HEK293 (cell line): ENCODE measurements at regions of chr10 and their contacts with region 1.

Region 1: DNA sequence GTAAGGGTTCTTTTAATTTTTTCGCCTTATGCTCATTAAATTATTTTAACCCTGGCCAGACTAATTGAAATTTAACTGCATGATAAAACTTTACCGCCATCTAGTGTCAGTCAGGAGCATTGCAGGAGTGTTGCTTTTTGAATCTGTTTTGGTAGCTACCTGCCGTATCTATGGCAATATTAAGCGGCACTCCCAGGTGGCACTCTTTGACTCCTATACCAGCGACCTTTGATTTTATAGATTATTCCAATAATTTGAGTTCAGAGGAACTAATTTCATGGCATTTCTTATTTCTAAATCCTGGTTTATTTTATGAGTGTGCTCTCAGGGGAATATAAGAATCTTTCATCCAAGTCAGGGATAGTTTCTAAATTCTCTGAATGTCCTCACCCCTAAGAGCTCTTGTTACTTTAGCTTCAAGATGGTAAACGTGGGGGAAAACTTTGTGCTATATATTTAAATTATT is 198.9 kb downstream of the REEP3 start:
- H3K4me3 ChIP-seq: no peak overlapping the region
- H3K27ac ChIP-seq: no peak overlapping the region
- H3K4me1 ChIP-seq: no peaks in the 10 kb centered on the region
- CTCF ChIP-seq: peak; percentile 74

Region 2: DNA sequence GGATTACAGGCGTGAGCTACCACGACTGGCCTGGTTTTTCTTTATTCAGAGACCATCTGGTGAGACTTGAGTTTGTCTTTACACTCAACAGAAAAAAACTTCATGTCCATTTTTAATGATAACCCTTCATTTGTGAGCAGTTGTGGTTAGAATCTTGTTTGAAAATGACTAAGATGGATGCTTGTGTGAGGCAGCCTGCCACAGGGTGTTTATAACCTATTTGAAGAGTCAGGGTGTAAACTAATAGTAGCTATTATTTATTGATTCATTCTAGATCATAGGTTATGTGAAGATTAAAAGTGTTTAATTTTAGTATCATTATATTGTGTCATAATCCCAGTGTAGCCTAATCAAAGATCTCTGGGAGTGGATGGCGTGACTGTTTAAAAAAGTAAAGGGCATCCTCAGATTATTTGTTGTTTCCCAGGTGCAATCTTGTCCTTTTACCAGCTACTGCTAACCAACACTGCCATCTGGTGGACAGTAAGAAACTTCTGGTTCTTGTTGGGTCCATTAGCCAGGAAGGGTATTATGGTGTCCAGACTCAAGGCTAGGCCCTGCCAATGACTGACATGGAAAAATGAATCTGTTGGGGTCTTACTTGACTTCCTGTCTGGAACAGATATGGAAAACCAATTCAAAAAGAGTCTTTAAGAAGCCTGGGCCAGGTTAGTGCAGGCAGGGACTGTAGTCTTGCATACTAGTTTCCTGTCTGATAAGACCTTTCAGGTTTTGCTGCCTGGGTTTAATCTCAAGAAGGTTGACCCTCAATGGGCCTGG is 562.1 kb before region 1 on chr10:
- CTCF ChIA-PET with region 1: interaction called, 19 read pairs
- POLR2A ChIA-PET with region 1: no interaction called
- H3K4me3 ChIP-seq: no peak overlapping the region
- H3K27ac ChIP-seq: no peak overlapping the region
- H3K4me1 ChIP-seq: no peaks in the 10 kb centered on the region
- CTCF ChIP-seq: peak; percentile 43; the same call in 1 of the 2 replicates

Region 3: GRCh38 chr10:63166742-63167258 is 553.3 kb before region 1 on chr10:
- CTCF ChIA-PET with region 1: interaction called, 75 read pairs
- POLR2A ChIA-PET with region 1: no interaction called
- H3K4me3 ChIP-seq: no peak overlapping the region
- H3K27ac ChIP-seq: no peak overlapping the region
- H3K4me1 ChIP-seq: peaks cover 8% of the 10 kb centered on the region
- CTCF ChIP-seq: no peak; the same call in 1 of the 2 replicates

Region 4: DNA sequence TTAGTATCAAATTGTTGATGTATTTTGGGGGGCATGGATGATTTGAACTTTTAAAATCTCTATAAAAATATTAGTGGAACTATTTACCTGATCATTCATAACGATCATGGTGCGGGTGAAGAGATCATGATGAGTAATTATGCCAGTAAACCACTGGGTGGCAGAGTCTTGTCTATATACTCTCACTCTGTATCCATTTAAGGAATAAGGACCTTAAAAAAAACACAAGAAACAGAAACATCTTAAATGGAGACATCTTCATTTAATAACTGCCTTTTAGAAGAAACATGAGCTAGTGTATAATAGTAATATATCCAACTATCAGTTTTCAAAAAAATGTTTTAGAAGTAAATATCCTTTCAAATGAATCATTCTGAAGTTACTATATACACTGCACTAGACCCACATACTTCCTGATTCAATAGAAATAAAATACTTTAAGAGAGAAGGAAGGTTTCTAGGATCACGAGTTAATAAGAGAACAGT is 502.9 kb before region 1 on chr10:
- CTCF ChIA-PET with region 1: interaction called, 24 read pairs
- POLR2A ChIA-PET with region 1: no interaction called
- H3K4me3 ChIP-seq: no peak overlapping the region
- H3K27ac ChIP-seq: no peak overlapping the region
- H3K4me1 ChIP-seq: no peaks in the 10 kb centered on the region; the same call in 1 of the 2 replicates
- CTCF ChIP-seq: no peak

Region 5: DNA sequence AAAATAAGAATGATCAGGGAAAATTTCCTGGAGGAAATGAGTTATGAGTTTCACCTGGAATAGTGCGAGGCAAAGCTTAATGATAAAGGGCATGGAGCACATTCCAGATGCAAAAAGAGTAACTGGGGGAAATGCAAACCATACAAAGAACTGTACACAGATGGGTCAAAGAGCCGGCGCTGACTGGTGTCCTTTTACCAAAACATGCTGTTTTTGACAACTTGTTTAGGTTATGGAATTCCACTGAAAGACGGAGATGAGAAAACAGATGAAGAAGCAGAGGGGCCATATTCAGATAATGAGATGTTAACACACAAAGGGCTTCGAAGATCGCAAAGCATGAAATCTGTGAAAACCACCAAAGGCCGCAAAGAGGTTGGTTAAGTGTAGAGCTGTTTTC is 100.7 kb before region 1 on chr10:
- CTCF ChIA-PET with region 1: no interaction called
- POLR2A ChIA-PET with region 1: no interaction called
- H3K4me3 ChIP-seq: no peak overlapping the region
- H3K27ac ChIP-seq: no peak overlapping the region
- H3K4me1 ChIP-seq: no peaks in the 10 kb centered on the region; the same call in 1 of the 2 replicates
- CTCF ChIP-seq: no peak

Region 6: GRCh38 chr10:63629363-63630084 is 90.6 kb before region 1 on chr10:
- CTCF ChIA-PET with region 1: interaction called, 47 read pairs
- POLR2A ChIA-PET with region 1: interaction called, 20 read pairs
- H3K4me3 ChIP-seq: peak overlapping the region; percentile 59
- H3K27ac ChIP-seq: peak overlapping the region; percentile 100
- H3K4me1 ChIP-seq: peaks cover 16% of the 10 kb centered on the region
- CTCF ChIP-seq: peak; percentile 92

Region 7: GRCh38 chr10:63767138-63767801 is 47.2 kb after region 1 on chr10:
- CTCF ChIA-PET with region 1: interaction called, 68 read pairs
- POLR2A ChIA-PET with region 1: no interaction called
- H3K4me3 ChIP-seq: no peak overlapping the region
- H3K27ac ChIP-seq: no peak overlapping the region
- H3K4me1 ChIP-seq: no peaks in the 10 kb centered on the region
- CTCF ChIP-seq: no peak

Region 8: DNA sequence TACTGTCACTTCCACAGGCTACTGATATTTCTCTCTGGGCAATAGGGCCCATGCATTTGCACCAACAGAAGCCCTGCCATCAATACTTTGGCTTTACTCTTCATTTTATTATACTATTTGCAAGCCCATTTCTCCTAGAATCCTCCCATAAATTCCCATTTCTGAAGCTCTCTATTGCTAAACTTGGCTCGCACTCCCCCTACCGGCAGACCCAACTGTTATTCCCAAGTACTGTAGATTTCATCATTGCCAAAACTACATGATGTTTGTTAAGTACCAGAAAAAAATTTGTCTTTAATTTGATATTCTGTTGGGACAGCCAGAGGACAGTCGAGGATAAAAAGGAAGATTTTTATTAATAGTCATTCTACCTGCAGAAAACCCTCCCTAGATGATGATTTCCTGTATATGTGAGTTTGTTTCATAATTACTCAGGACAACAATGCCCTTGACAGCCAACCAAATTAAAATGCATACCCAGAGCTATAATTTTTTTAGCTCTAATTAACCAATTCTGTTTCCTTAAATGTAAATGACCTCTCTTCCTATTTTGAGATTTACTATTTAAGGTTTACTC is 99.7 kb after region 1 on chr10:
- CTCF ChIA-PET with region 1: interaction called, 10 read pairs
- POLR2A ChIA-PET with region 1: no interaction called
- H3K4me3 ChIP-seq: no peak overlapping the region
- H3K27ac ChIP-seq: no peak overlapping the region
- H3K4me1 ChIP-seq: no peaks in the 10 kb centered on the region
- CTCF ChIP-seq: no peak